CD4-positive, alpha-beta memory T cell (primary cell): ENCODE measurements at regions of chr6 and their contacts with region 1.

Region 1: GRCh38 chr6:44246663-44247337 is at the start of gene HSP90AB1:
- DNase-seq: peak; percentile 96 to 99 (median 97)
- H3K4me3 ChIP-seq: peak within 1 kb of the TSS; percentile 83 to 96
- H3K4me3 Mint-ChIP-seq: peak within 1 kb of the TSS; percentile 97 to 100 (median 99)
- H3K27ac ChIP-seq: peak within 1 kb of the TSS; percentile 97
- H3K27ac Mint-ChIP-seq: peak within 1 kb of the TSS; percentile 95 to 99 (median 99)
- H3K4me1 ChIP-seq: peaks cover 33% of the 10 kb centered on the region
- H3K4me1 Mint-ChIP-seq: peaks cover 27 to 62% (median 36%) of the 10 kb centered on the region in 4 donors
- H3K27me3 ChIP-seq: no peaks in the 10 kb centered on the region
- H3K27me3 Mint-ChIP-seq: peaks cover 2 to 4% of the 10 kb centered on the region in 2 donors
- total RNA-seq, gene HSP90AB1: 303 to 324 TPM

Region 2: DNA sequence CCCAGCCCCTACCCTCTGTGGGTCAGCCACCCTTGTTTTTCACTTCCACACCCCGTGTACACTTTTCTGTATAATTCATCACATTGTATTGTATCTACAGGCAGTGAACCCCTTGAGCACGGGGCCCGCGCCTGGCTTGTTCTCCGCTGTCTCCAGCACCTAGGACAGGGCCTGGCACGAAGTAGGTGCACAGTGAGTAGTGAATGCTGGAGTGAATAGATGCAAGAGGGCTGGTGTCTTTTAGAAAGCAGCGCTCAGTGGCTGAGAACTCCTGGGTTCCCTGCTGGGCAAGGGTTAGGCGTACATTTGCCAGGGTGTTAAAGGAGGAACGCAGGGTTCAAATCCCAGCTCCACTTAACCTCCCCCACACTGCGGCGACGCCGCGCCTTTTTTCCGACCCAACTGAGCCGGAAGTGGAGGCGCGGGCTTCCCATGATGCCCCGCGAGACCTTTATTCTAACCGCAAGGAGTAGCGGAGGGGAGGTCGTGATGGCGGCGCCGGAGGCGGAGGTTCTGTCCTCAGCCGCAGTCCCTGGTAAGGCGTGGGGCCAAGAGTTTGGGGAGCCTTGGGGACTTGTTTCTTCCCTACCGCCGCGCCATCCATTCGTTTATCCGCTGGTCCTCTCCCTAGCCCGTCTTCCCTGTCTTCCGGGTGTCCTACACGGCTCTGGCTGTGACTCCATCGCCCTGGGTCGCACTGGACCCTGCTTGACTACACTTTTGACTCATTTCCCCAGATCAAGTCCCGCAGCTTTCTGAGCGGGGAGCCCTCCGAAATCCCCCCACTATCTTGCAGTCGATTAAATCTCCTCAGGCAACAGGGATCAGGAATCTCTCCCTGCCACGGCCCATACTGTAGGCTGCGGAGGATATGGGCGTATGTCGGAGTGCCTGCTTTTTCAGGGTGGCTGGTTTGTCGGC is 611.2 kb before region 1 on chr6 and contains the start of gene MAD2L1BP:
- CTCF ChIA-PET with region 1: no interaction called
- POLR2A ChIA-PET with region 1: interaction called, 12 read pairs
- intact Hi-C with region 1: loop called (anchors 5 kb)
- DNase-seq: peak; percentile 85 to 89 (median 87)
- H3K4me3 ChIP-seq: peak within 1 kb of the TSS; percentile 66 to 94
- H3K4me3 Mint-ChIP-seq: peak within 1 kb of the TSS; percentile 93 to 100 (median 99)
- H3K27ac ChIP-seq: peak within 1 kb of the TSS; percentile 84
- H3K27ac Mint-ChIP-seq: peak within 1 kb of the TSS; percentile 96 to 98 (median 97)
- H3K4me1 ChIP-seq: peaks cover 49% of the 10 kb centered on the region
- H3K4me1 Mint-ChIP-seq: peaks cover 26 to 62% (median 41%) of the 10 kb centered on the region in 4 donors
- H3K27me3 ChIP-seq: no peaks in the 10 kb centered on the region
- H3K27me3 Mint-ChIP-seq: no peaks in the 10 kb centered on the region
- total RNA-seq, gene MAD2L1BP: 31.7 to 33.0 TPM

Region 3: GRCh38 chr6:44127186-44128019 is 119.4 kb before region 1 on chr6 and contains the starts of genes MRPL14 and TMEM63B:
- CTCF ChIA-PET with region 1: no interaction called
- POLR2A ChIA-PET with region 1: interaction called, 12 read pairs
- intact Hi-C with region 1: loop called (anchors 1 kb)
- DNase-seq: peak; percentile 88 to 91 (median 90)
- H3K4me3 ChIP-seq: peak within 1 kb of the TSS; percentile 37 to 72
- H3K4me3 Mint-ChIP-seq: peak within 1 kb of the TSS; percentile 94 to 99 (median 96)
- H3K27ac ChIP-seq: peak within 1 kb of the TSS; percentile 97
- H3K27ac Mint-ChIP-seq: peak within 1 kb of the TSS; percentile 89 to 99 (median 97)
- H3K4me1 ChIP-seq: peaks cover 56% of the 10 kb centered on the region
- H3K4me1 Mint-ChIP-seq: peaks cover 47 to 77% (median 58%) of the 10 kb centered on the region in 4 donors
- H3K27me3 ChIP-seq: no peaks in the 10 kb centered on the region
- H3K27me3 Mint-ChIP-seq: no peaks in the 10 kb centered on the region
- total RNA-seq, gene MRPL14: 21.7 to 23.9 TPM
- total RNA-seq, gene TMEM63B: 20.7 to 24.1 TPM

Region 4: GRCh38 chr6:44221291-44221960 is 25.4 kb before region 1 on chr6:
- CTCF ChIA-PET with region 1: interaction called, 27 read pairs
- POLR2A ChIA-PET with region 1: interaction called, 72 read pairs
- intact Hi-C with region 1: loop called (anchors 1 kb)
- DNase-seq: peak; percentile 72 to 80 (median 74)
- H3K4me3 ChIP-seq: no peak overlapping the region
- H3K4me3 Mint-ChIP-seq: peak overlapping the region in 4 of 8 donors; percentile 15 to 68 (median 29)
- H3K27ac ChIP-seq: no peak overlapping the region
- H3K27ac Mint-ChIP-seq: peak overlapping the region in 4 of 7 donors; percentile 44 to 72 (median 56)
- H3K4me1 ChIP-seq: peaks cover 29% of the 10 kb centered on the region
- H3K4me1 Mint-ChIP-seq: peaks cover 7 to 36% (median 21%) of the 10 kb centered on the region in 4 donors
- H3K27me3 ChIP-seq: no peaks in the 10 kb centered on the region
- H3K27me3 Mint-ChIP-seq: peaks cover 2 to 7% of the 10 kb centered on the region in 2 donors

Region 5: DNA sequence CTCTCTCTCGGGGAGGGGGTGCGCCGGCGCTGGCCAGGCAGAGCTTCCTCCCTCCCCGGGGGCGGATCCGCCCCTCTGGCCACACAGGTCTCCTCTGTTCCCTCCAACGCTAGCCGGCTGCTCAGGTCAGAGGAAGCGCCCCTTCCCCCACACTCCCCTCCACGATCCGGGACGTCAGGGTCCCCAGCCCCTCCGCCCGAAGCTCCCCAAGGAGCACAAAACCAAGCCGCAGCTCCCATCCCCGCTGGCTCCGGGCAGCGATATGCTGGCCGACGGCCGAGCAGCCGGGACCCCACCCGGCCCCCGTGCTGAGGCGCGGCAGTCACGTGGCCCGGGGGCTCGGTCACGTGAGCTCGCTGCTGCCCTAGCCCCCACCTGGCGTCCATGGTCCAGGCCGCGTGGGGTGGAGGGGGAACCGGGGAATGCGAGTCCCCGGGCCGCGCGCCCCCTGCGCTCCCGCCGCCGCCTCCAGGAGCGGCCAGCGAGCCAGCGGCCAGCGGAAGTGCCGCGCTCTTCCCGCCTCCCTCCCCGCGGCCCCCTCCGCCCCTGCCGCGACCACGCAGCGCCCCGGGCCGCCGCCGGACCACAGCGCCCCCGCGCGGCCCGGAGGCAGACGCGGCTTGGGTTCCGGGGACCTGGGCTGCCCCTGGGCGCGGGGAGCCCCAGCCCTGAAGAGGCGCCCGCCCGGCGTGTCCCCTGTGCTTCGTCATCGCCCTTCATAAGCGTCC is 10.4 kb after region 1 on chr6 and contains the start of gene SLC35B2:
- CTCF ChIA-PET with region 1: interaction called, 68 read pairs
- POLR2A ChIA-PET with region 1: interaction called, 217 read pairs
- intact Hi-C with region 1: loop called (anchors 1 kb)
- DNase-seq: peak; percentile 57 to 81 (median 70)
- H3K4me3 ChIP-seq: peak within 1 kb of the TSS; percentile 63 to 73
- H3K4me3 Mint-ChIP-seq: peak within 1 kb of the TSS; percentile 86 to 94 (median 89)
- H3K27ac ChIP-seq: peak within 1 kb of the TSS; percentile 82
- H3K27ac Mint-ChIP-seq: peak within 1 kb of the TSS; percentile 80 to 97 (median 96)
- H3K4me1 ChIP-seq: peaks cover 40% of the 10 kb centered on the region
- H3K4me1 Mint-ChIP-seq: peaks cover 33 to 62% (median 49%) of the 10 kb centered on the region in 4 donors
- H3K27me3 ChIP-seq: no peaks in the 10 kb centered on the region
- H3K27me3 Mint-ChIP-seq: no peaks in the 10 kb centered on the region
- total RNA-seq, gene SLC35B2: 20.7 to 20.9 TPM

Region 6: DNA sequence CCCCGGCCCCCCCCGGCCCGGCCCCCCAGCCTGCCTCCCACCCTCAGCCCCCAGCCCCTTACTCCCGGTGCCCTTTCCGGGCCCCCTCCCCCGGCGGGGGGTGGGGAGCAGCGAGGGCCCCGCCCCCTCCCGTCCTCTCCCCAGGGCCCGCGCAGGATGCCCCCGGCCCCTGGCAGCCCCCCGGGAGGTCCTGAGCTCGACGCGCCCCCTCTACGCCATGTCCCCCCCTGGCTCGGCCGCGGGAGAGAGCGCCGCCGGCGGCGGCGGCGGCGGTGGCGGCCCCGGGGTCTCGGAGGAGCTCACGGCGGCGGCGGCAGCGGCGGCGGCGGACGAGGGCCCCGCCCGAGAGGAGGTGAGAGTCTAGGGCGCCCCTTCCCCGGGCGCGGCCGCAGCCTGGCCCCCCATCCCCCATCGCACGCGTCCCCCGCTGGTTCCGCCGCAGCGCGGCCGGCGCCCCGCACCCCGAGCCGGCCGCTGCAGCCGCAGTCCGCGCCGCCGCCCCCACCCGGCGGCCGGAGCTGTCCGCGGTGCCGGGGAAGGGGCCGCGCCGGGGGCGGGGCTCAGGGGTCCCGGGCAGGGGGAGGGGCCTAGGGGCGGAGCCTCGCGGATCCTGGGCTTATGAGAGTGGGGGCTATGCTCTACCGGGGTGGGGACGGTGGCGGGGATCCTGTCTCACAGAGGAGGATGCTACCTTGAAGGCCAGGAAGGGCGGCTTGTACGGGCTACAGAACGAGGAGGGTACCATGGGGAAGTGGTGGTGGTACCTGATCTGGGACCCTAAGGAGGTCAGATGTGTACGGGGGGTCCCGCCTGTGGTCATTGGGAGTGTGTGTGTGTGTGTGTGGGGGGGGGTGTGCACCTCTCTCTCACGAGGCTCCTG is 24.0 kb after region 1 on chr6:
- CTCF ChIA-PET with region 1: interaction called, 82 read pairs
- POLR2A ChIA-PET with region 1: interaction called, 97 read pairs
- intact Hi-C with region 1: loop called (anchors 1 kb)
- DNase-seq: no peak
- H3K4me3 ChIP-seq: no peak overlapping the region
- H3K4me3 Mint-ChIP-seq: peak overlapping the region; percentile 64 to 79 (median 76)
- H3K27ac ChIP-seq: no peak overlapping the region
- H3K27ac Mint-ChIP-seq: peak overlapping the region in 2 of 7 donors; percentile 35 to 74
- H3K4me1 ChIP-seq: peaks cover 7% of the 10 kb centered on the region
- H3K4me1 Mint-ChIP-seq: peaks cover 0 to 17% (median 7%) of the 10 kb centered on the region in 4 donors
- H3K27me3 ChIP-seq: peaks cover 33% of the 10 kb centered on the region
- H3K27me3 Mint-ChIP-seq: peaks cover 31 to 48% of the 10 kb centered on the region in 2 donors

Region 7: GRCh38 chr6:44312901-44313788 is 66.3 kb after region 1 on chr6 and contains the start of gene AARS2:
- CTCF ChIA-PET with region 1: no interaction called
- POLR2A ChIA-PET with region 1: interaction called, 26 read pairs
- intact Hi-C with region 1: loop called (anchors 2 kb)
- DNase-seq: peak; percentile 86 to 90 (median 87)
- H3K4me3 ChIP-seq: peak within 1 kb of the TSS; percentile 61 to 91
- H3K4me3 Mint-ChIP-seq: peak within 1 kb of the TSS; percentile 90 to 98 (median 96)
- H3K27ac ChIP-seq: peak within 1 kb of the TSS; percentile 79
- H3K27ac Mint-ChIP-seq: peak within 1 kb of the TSS; percentile 82 to 96 (median 95)
- H3K4me1 ChIP-seq: peaks cover 11% of the 10 kb centered on the region
- H3K4me1 Mint-ChIP-seq: peaks cover 5 to 30% (median 20%) of the 10 kb centered on the region in 4 donors
- H3K27me3 ChIP-seq: no peaks in the 10 kb centered on the region
- H3K27me3 Mint-ChIP-seq: peaks cover 0 to 6% of the 10 kb centered on the region in 2 donors
- total RNA-seq, gene AARS2: 23.7 to 25.6 TPM